Mammary epithelial cell (primary cell): ENCODE measurements at regions of chr22 and their contacts with region 1.

Region 1: GRCh38 chr22:36259615-36260300 is 6.8 kb downstream of the APOL1 start:
- DNase-seq: no peak
- H3K4me3 ChIP-seq: no peak overlapping the region
- H3K27ac ChIP-seq: no peak overlapping the region
- H3K4me1 ChIP-seq: no peaks in the 10 kb centered on the region
- H3K27me3 ChIP-seq: no peaks in the 10 kb centered on the region
- CTCF ChIP-seq: no peak

Region 2: DNA sequence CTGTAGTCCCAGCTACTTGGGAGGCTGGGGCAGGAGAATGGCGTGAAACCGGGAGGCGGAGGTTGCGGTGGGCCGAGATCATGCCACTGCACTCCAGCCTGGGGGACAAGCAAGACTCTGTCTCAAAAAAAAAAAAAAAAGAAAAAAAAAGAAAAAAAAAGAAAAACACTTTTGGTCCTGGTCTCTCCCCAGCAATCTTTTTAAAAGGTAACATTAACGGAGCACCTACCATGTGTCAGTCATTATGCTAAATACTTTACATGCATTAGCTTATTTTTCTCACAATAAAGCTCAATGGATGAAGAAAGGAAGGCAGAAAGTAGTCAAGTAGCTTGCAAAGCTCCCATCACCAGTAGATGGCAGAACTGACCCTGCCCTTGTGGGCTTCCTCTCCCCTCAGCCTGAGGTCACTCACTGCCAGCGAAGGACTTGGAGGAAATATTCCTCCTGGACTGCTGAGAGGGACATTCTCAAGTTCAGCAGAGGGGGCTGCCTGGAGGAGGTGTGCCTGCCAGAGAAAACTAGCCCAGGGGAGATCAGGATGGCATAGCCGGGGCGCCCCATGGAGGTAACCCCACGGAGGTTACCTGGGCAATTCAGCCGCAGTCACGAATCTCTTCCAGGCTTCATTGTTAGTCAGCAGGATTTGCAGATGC is 114.7 kb before region 1 on chr22:
- CTCF ChIA-PET with region 1: no interaction called
- dilution Hi-C with region 1: no loop called
- in situ Hi-C with region 1: no loop called
- intact Hi-C with region 1: no loop called
- DNase-seq: peak; percentile 33
- H3K4me3 ChIP-seq: no peak overlapping the region
- H3K27ac ChIP-seq: no peak overlapping the region
- H3K4me1 ChIP-seq: no peaks in the 10 kb centered on the region
- H3K27me3 ChIP-seq: no peaks in the 10 kb centered on the region
- CTCF ChIP-seq: peak; percentile 69 to 79

Region 3: GRCh38 chr22:36227386-36227785 is 32.4 kb before region 1 on chr22:
- CTCF ChIA-PET with region 1: no interaction called
- dilution Hi-C with region 1: loop called (anchors 5 kb)
- in situ Hi-C with region 1: no loop called
- intact Hi-C with region 1: no loop called
- DNase-seq: no peak
- H3K4me3 ChIP-seq: no peak overlapping the region
- H3K27ac ChIP-seq: no peak overlapping the region
- H3K4me1 ChIP-seq: no peaks in the 10 kb centered on the region
- H3K27me3 ChIP-seq: no peaks in the 10 kb centered on the region
- CTCF ChIP-seq: no peak